ENCODE measurements at regions of chr20 and their contacts with region 1.

Region 1: GRCh38 chr20:63537525-63538203 is 488 bp upstream of the PTK6 start:
- DNase-seq: peak; percentile 92
- H3K4me3 ChIP-seq: peak overlapping the region; percentile 60
- H3K27ac ChIP-seq: peak overlapping the region; percentile 48
- H3K4me1 ChIP-seq: peaks cover 29% of the 10 kb centered on the region
- CTCF ChIP-seq: peak; percentile 86

Region 2: DNA sequence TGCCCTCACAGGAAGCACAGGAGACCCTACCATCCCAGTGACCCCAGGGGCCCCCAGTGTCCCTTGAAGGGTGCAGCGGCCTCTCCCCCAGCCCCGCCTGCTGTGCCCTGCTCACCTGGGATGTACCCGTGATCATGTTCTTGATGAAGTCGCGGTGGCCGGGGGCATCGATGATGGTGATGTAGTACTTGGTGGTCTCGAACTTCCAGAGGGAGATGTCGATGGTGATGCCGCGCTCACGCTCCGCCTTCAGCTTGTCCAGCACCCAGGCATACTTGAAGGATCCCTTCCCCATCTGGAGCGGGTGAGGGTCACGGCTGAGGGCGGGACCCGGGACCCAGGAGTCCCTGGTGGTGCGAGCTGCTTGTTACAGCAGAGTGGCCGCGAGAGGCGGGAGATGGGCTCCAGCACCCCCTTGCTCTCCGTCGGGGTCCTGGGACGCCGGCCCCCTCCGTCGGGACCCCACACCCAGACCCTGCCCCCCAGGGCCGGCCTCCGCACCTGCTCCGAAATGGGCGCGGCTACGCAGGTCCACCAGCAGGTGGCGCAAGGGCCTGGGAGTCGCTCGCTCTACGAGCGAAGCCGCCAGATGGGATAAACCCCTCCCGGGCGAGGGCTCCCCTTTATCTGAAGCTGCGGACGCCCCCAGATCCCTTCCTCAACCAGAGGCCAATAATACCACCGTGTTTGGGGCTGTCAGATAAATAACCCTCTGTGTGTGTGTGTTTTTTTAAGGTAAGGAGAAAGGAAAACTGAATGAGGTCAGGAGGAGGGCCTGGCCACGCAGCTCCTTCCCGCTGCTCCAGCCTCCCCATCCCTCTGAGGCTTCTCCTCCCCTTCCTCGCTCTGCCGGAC is 41.7 kb before region 1 on chr20:
- CTCF ChIA-PET with region 1: no interaction called
- POLR2A ChIA-PET with region 1: no interaction called
- intact Hi-C with region 1: no loop called
- DNase-seq: peak; percentile 73
- H3K4me3 ChIP-seq: no peak overlapping the region
- H3K27ac ChIP-seq: no peak overlapping the region
- H3K4me1 ChIP-seq: no peaks in the 10 kb centered on the region
- CTCF ChIP-seq: peak; percentile 92

Region 3: DNA sequence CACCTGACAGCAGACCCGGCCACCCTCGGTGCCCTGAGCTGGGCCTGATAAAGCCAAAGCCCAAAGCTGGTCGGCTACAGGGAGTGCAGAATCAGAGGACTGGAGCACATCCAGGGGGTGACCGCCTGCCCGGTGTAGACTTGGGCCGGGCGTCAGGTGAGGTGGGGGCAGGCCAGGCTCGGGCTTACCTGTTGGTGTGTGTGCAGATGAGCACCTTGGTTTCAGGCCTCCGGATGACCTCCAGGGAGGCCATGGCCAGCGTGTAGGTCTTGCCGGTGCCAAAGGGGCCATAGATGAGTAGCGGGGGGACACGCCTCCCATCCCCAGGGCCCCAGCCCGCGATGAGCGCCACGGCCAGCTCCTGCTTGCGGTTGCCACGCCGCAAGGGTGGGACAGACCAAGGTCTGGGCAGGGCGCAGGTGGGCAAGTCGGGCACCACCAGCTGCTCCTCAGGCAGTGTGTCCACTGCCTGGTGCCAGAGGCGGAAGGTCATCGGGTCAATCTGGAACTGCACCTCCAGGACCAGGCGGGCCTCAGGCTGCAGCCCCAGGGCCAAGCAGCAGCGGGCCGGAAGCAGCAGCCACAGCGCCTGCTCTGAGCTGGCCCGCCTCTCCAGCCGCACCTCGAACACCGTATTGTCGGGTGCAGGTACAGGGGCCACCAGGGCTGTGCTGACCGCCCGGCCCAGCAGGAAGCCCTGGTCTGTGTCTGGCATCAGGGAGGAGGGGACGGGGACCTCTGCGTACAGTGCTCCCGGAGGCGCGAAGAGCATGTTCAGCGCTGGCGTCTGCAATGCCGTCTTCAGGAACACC is 30.7 kb after region 1 on chr20:
- CTCF ChIA-PET with region 1: interaction called, 11 read pairs
- POLR2A ChIA-PET with region 1: no interaction called
- intact Hi-C with region 1: no loop called
- DNase-seq: no peak
- H3K4me3 ChIP-seq: no peak overlapping the region
- H3K27ac ChIP-seq: no peak overlapping the region
- H3K4me1 ChIP-seq: peaks cover 12% of the 10 kb centered on the region
- CTCF ChIP-seq: no peak

Region 4: GRCh38 chr20:63627129-63627750 is 89.6 kb after region 1 on chr20:
- CTCF ChIA-PET with region 1: no interaction called
- POLR2A ChIA-PET with region 1: no interaction called
- intact Hi-C with region 1: loop called (anchors 5 kb)
- DNase-seq: peak; percentile 97
- H3K4me3 ChIP-seq: peak overlapping the region; percentile 96
- H3K27ac ChIP-seq: peak overlapping the region; percentile 48
- H3K4me1 ChIP-seq: peaks cover 15% of the 10 kb centered on the region
- CTCF ChIP-seq: no peak

Region 5: DNA sequence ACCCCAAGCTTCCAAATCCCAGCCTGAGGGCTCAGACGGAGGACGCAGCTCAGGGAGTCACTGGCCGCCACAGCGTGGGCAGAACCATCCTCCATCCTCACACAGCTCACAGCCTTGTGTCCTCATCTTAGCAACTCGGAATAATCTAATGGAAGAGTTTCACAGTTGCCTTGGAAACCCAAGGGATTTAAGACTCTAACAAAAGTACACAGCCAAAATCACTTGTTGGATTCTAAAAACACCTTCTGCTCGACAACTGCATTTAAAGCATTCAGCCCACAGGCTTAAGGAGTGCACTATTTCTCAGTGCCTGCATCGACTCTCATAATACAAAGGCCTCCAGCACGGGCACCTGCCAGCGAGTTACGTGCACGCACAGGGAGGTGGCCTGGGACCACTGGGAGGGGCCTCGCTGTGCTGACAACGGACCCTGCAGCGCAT is 248.0 kb after region 1 on chr20:
- CTCF ChIA-PET with region 1: interaction called, 10 read pairs
- POLR2A ChIA-PET with region 1: no interaction called
- intact Hi-C with region 1: no loop called
- DNase-seq: no peak
- H3K4me3 ChIP-seq: no peak overlapping the region
- H3K27ac ChIP-seq: no peak overlapping the region
- H3K4me1 ChIP-seq: peaks cover 32% of the 10 kb centered on the region
- CTCF ChIP-seq: no peak

Region 6: DNA sequence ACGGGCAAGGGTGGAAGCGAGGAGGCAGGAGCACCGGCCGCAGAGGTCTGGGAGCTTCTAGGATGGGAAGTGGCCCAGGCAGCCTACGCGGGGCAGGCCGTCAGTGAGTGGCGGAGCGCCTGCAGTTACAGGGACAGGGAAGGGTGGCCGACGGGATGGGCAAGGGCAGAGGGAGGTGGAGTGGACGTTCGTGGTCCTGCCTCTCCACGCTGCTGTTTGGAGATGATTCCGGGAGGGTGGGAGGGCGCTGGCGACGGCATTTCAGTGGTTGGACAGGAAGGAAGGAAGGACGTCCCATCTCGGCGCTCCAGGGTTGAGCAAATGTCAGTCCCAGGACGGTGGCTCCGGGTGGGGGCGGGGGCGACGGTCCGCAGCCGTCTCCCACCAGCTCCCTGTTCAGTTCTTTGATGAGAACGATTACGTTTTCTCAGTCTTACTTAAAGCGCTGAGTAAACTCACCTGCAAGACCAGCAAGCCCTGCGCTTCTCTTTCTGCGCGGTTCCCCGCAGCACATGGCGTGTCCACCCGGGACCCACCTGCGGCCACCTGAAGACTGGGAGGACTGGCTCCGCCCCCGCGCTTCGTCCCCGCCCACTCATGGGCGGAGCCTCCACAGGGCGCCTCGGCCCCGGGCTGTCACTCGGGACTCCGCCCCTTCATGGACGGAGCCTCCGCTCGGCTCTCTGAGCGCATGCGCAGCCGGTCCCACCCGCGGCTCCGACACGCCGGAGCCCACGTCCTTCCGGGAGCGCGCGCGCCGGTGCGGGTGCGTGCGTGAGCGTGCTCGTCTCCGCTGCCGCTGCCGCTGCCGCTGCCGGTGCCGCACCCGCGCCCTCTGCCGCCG is 356.9 kb after region 1 on chr20 and contains the start of gene DNAJC5:
- CTCF ChIA-PET with region 1: no interaction called
- POLR2A ChIA-PET with region 1: no interaction called
- intact Hi-C with region 1: loop called (anchors 5 kb)
- DNase-seq: peak; percentile 97
- H3K4me3 ChIP-seq: peak within 1 kb of the TSS; percentile 84
- H3K27ac ChIP-seq: peak within 1 kb of the TSS; percentile 75
- H3K4me1 ChIP-seq: peaks cover 11% of the 10 kb centered on the region
- CTCF ChIP-seq: no peak
- total RNA-seq, gene DNAJC5: 23.5 and 27.7 TPM in 2 replicates

Region 7: DNA sequence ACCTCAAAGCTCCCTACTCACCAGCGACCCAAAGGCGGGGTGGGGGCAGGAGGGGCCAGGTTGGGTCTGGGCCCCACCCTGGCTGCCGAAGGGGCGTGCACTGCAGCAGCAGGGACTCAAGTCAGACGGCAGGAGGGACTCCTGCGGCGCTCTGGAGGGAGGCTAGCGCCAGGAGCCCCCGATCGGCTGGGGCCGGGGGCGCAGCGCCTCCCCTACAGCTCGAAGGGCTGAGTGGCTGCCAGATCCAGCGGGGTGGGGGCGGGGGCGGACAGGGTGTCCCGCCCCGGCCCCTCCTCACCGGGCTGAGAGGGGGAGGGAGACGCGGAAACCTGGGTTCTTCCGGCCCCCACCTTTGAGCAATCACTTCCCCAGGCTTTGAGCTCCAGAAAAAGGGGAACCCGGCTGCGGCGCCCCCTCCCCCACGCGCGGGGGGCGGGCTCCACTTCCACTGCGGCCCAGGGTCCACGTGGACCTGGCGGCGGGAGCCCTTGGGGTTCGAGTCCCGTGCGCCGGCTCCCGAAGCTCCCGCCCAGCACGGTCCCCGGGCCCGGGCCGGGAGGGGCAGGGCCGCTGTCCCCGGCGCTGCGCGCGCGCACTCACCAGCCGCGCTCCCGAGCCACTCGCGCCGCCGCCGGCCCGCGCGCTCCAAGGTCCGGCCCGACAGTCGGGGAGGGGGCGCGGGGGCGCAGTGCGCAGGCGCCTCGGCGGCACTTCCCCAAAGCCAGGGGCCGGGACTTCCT is 541.8 kb after region 1 on chr20 and contains the start of gene RGS19:
- CTCF ChIA-PET with region 1: interaction called, 13 read pairs
- POLR2A ChIA-PET with region 1: no interaction called
- intact Hi-C with region 1: no loop called
- DNase-seq: peak; percentile 87
- H3K4me3 ChIP-seq: peak within 1 kb of the TSS; percentile 94
- H3K27ac ChIP-seq: peak within 1 kb of the TSS; percentile 97
- H3K4me1 ChIP-seq: peaks cover 44% of the 10 kb centered on the region
- CTCF ChIP-seq: peak; percentile 23; the same call in 1 of the 2 replicates
- total RNA-seq, gene RGS19: 85.5 and 106 TPM in 2 replicates